SK-N-SH (cell line): ENCODE measurements at regions of chr17 and their contacts with region 1.

Region 1: DNA sequence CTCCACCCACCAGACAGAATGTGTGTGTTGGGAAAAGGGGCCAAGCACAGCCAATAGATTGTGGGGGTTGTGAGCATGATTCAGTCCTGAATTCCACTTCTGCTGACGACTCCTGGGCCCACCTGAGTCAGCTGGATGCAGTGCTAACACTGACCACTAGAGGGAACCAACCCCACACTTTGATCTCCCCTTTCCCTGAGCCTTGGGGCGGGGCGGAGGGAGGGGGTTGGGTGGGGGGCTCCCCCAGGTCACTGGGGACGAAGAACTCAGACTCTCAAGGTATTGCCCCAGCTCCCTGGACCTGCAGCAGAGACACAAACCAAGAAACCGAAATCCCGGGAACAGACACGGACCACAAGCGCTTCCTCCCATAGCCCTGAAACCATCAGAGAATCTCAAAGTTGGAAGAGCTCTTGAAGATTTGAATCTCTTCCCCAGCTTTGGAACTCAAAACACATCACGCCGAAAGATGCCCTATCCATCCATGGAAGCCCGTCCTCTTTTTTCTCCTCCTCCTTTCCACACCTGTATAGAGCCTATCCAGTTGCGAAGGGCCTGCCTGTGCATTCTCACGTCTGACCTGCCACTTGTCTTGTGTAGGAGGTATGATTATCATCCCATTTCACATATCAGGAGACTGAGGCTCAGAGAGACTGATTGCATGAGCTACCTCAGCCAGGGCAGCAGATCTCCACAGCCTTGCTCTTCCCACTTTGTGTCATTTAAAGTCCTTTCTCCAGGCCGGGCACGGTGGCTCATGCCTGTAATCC is 784 bp upstream of the CSHL1 start:
- DNase-seq: peak; percentile 88
- H3K4me3 ChIP-seq: no peak overlapping the region
- H3K27ac ChIP-seq: no peak overlapping the region
- H3K4me1 ChIP-seq: no peaks in the 10 kb centered on the region; a peak in 1 of 4 replicates
- H3K27me3 ChIP-seq: peaks cover 45% of the 10 kb centered on the region
- CTCF ChIP-seq: peak; percentile 70
- EP300 ChIP-seq: no peak
- RAD21 ChIP-seq: peak; percentile 62

Region 2: GRCh38 chr17:63834431-63835166 is 77.2 kb before region 1 on chr17:
- CTCF ChIA-PET with region 1: no interaction called
- POLR2A ChIA-PET with region 1: no interaction called
- DNase-seq: peak; percentile 87
- H3K4me3 ChIP-seq: no peak overlapping the region
- H3K27ac ChIP-seq: peak overlapping the region; percentile 12 to 71; a peak in 3 of 4 replicates
- H3K4me1 ChIP-seq: peaks cover 11 to 29% of the 10 kb centered on the region in 2 experiments
- H3K27me3 ChIP-seq: no peaks in the 10 kb centered on the region
- CTCF ChIP-seq: peak; percentile 95
- EP300 ChIP-seq: peak in 1 of 2 experiments; percentile 15; a peak in 1 of 4 replicates
- RAD21 ChIP-seq: peak; percentile 77

Region 3: GRCh38 chr17:63881876-63882601 is 29.8 kb before region 1 on chr17 and contains the start of gene GH2:
- CTCF ChIA-PET with region 1: interaction called, 10 read pairs
- POLR2A ChIA-PET with region 1: no interaction called
- DNase-seq: peak; percentile 85
- H3K4me3 ChIP-seq: no peak within 1 kb of the TSS
- H3K27ac ChIP-seq: no peak within 1 kb of the TSS
- H3K4me1 ChIP-seq: no peaks in the 10 kb centered on the region
- H3K27me3 ChIP-seq: peaks cover 5% of the 10 kb centered on the region
- CTCF ChIP-seq: peak; percentile 51
- EP300 ChIP-seq: no peak
- RAD21 ChIP-seq: no peak
- polyA plus RNA-seq, gene GH2: not detected in 2 replicates

Region 4: GRCh38 chr17:63946440-63947367 is 34.9 kb after region 1 on chr17:
- CTCF ChIA-PET with region 1: interaction called, 63 read pairs
- POLR2A ChIA-PET with region 1: no interaction called
- DNase-seq: peak; percentile 91
- H3K4me3 ChIP-seq: no peak overlapping the region
- H3K27ac ChIP-seq: no peak overlapping the region
- H3K4me1 ChIP-seq: no peaks in the 10 kb centered on the region
- H3K27me3 ChIP-seq: no peaks in the 10 kb centered on the region; the same call in 1 of the 2 replicates
- CTCF ChIP-seq: peak; percentile 77
- EP300 ChIP-seq: no peak
- RAD21 ChIP-seq: peak; percentile 50

Region 5: GRCh38 chr17:63974594-63975192 is 62.9 kb after region 1 on chr17:
- CTCF ChIA-PET with region 1: interaction called, 18 read pairs
- POLR2A ChIA-PET with region 1: no interaction called
- DNase-seq: no peak
- H3K4me3 ChIP-seq: peak overlapping the region in 1 of 2 experiments; percentile 0; a peak in 1 of 4 replicates
- H3K27ac ChIP-seq: peak overlapping the region in 1 of 2 experiments; percentile 16; a peak in 1 of 4 replicates
- H3K4me1 ChIP-seq: peaks cover 8 to 12% of the 10 kb centered on the region in 2 experiments; a peak in 3 of 4 replicates
- H3K27me3 ChIP-seq: no peaks in the 10 kb centered on the region
- CTCF ChIP-seq: no peak
- EP300 ChIP-seq: no peak
- RAD21 ChIP-seq: no peak

Region 6: DNA sequence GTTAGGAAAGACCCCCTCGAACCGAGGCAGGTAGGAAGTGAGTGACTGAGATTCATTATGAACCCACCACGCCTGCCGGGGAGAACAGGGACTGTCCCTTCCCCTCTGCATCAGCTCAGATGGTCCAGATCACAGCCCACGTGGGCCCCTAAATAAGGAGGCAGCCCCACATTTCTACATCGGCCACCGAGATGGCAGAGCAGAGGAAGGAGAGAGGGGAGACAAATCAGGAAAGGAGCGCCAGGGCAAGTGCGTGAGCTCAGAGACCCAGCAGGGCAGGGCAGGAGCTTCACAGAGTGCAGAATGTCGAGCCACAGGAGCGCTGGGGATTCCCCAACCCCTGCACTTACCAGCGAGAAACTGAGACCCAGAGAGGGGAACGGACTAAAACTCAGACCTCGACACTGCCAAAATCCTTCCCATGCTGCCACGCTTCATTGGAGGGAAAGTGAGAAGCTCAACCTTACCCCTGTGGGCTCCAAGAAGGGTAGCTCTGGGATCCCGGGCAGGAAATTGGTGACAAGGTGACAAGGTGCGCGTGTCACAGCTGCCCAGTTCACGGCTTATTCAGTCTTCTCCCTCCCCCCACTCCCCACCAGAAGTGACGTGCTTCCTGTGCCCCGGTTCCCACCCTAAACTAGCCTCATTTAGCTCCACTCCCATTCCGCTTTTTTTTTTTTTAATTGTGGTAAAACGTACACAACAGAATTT is 108.4 kb after region 1 on chr17 and contains the start of gene ICAM2:
- CTCF ChIA-PET with region 1: interaction called, 214 read pairs
- POLR2A ChIA-PET with region 1: no interaction called
- DNase-seq: no peak
- H3K4me3 ChIP-seq: no peak within 1 kb of the TSS
- H3K27ac ChIP-seq: no peak within 1 kb of the TSS
- H3K4me1 ChIP-seq: no peaks in the 10 kb centered on the region
- H3K27me3 ChIP-seq: no peaks in the 10 kb centered on the region
- CTCF ChIP-seq: no peak
- EP300 ChIP-seq: no peak
- RAD21 ChIP-seq: no peak
- polyA plus RNA-seq, gene ICAM2: 0.08 TPM in 1 of 2 replicates, not detected in the other